ENCODE measurements at regions of chr21 and their contacts with region 1.

Region 1: DNA sequence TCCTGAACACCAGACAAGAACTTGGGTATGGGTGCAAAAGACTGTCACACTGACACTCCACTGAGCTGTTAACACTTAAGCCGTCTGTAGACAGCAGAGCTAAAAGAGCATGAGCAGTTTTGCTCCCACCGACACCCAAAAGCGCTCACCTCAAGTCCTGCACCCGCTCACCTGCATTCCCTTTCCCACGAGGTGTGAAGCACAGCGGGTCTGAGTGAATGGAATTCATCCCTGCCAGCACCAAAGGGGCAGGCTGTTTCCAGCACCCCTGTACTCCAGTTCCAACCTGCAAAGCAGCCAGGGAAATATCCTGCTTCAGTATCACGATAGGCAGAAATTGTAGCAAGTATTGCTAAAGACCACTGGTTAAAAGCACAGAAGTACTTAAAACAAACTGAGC is 28.8 kb downstream of the KRTAP21-3 start:
- DNase-seq: no peak
- H3K4me3 ChIP-seq: no peak overlapping the region
- H3K27ac ChIP-seq: no peak overlapping the region
- H3K4me1 ChIP-seq: no peaks in the 10 kb centered on the region
- H3K27me3 ChIP-seq: no peaks in the 10 kb centered on the region
- CTCF ChIP-seq: no peak

Region 2: GRCh38 chr21:28852706-28853105 is 1837.1 kb before region 1 on chr21:
- intact Hi-C with region 1: no loop called
- DNase-seq: no peak
- H3K4me3 ChIP-seq: no peak overlapping the region
- H3K27ac ChIP-seq: no peak overlapping the region
- H3K4me1 ChIP-seq: no peaks in the 10 kb centered on the region
- H3K27me3 ChIP-seq: no peaks in the 10 kb centered on the region
- CTCF ChIP-seq: no peak

Region 3: DNA sequence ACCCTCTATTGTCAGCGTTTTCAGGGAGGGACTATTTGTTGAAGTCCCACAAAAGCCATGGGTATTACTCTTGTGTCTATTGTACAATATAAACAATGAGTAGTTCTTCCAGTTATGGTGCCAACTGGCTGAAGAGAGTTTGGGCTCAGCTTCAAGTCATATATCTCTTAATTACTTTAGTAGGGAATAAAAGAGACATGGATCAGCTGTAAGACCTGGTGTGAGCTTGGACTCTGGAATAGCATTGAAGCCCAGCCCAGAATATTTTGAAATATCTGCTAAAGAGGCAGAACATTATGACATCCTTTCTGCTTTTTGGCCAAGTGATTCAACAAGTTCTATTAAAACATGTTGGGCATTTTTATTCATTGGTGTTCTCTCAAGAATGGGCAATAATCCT is 1166.2 kb before region 1 on chr21:
- intact Hi-C with region 1: loop called (anchors 5 kb)
- DNase-seq: no peak
- H3K4me3 ChIP-seq: no peak overlapping the region
- H3K27ac ChIP-seq: no peak overlapping the region
- H3K4me1 ChIP-seq: no peaks in the 10 kb centered on the region
- H3K27me3 ChIP-seq: no peaks in the 10 kb centered on the region
- CTCF ChIP-seq: no peak

Region 4: GRCh38 chr21:31203371-31204054 is 513.7 kb after region 1 on chr21:
- intact Hi-C with region 1: no loop called
- DNase-seq: no peak
- H3K4me3 ChIP-seq: no peak overlapping the region
- H3K27ac ChIP-seq: no peak overlapping the region
- H3K4me1 ChIP-seq: no peaks in the 10 kb centered on the region
- H3K27me3 ChIP-seq: no peaks in the 10 kb centered on the region
- CTCF ChIP-seq: no peak

Measured in tibial artery (tissue), 4 donors.